ENCODE measurements at regions of chr20 and their contacts with region 1.

Region 1: GRCh38 chr20:57061058-57061900 is 205.2 kb downstream of the BMP7 start:
- DNase-seq: no peak

Region 2: GRCh38 chr20:56540420-56540819 is 520.9 kb before region 1 on chr20:
- intact Hi-C with region 1: loop called in 1 of 2 experiments (anchors 10 kb)
- DNase-seq: no peak

Region 3: GRCh38 chr20:57934007-57934805 is 872.9 kb after region 1 on chr20:
- intact Hi-C with region 1: loop called in 1 of 2 experiments (anchors 5 kb)
- DNase-seq: peak; percentile 69

Measured in posterior vena cava (tissue), 2 donors.